Naive thymus-derived CD4-positive, alpha-beta T cell (primary cell): ENCODE measurements at regions of chr1 and their contacts with region 1.

Region 1: DNA sequence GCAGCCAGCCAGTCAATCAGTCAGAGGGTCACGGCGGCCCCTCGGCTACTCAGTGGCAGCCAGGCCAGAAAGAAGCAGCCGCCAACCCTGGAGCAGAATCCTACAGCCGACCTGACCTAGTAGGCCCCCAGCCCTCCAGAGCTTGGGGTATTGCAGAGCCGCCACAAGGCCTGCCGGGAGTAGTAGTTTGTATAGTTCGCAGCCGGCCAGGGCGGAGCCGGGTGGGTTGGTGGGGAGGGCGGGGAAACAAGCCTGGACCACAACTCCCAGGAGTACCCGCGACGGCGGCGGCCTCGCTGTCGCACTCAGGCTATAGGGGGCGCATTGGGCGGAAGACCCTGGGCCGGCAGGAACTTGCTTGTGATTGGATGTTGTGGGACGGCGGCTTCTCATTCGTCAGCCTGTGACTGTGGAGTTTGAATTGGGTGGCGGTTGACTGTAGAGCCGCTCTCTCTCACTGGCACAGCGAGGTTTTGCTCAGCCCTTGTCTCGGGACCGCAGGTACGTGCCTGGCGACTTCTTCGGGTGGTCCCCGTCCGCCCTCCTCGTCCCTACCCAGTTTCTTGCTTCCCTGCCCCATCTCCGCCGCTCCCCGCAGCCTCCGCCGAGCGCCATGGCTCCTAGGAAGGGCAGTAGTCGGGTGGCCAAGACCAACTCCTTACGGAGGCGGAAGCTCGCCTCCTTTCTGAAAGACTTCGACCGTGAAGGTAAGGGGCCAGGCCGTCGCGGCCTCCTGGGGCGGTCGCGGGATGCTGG is at the start of gene CDCA8:
- DNase-seq: peak; percentile 92 to 99 (median 97)
- ATAC-seq: peak; percentile 94
- H3K4me3 ChIP-seq: peak within 1 kb of the TSS; percentile 61
- H3K4me3 Mint-ChIP-seq: peak within 1 kb of the TSS; percentile 88 to 98 (median 96)
- H3K27ac ChIP-seq: peak within 1 kb of the TSS; percentile 77
- H3K27ac Mint-ChIP-seq: peak within 1 kb of the TSS; percentile 81 to 95 (median 88)
- H3K4me1 ChIP-seq: peaks cover 11 to 23% of the 10 kb centered on the region in 2 donors
- H3K4me1 Mint-ChIP-seq: peaks cover 23 to 54% (median 39%) of the 10 kb centered on the region in 7 donors
- H3K27me3 ChIP-seq: no peaks in the 10 kb centered on the region
- H3K27me3 Mint-ChIP-seq: peaks cover 0 to 3% (median 0%) of the 10 kb centered on the region in 5 donors
- total RNA-seq, gene CDCA8: 0.58 to 45.5 (median 0.92) TPM

Region 2: DNA sequence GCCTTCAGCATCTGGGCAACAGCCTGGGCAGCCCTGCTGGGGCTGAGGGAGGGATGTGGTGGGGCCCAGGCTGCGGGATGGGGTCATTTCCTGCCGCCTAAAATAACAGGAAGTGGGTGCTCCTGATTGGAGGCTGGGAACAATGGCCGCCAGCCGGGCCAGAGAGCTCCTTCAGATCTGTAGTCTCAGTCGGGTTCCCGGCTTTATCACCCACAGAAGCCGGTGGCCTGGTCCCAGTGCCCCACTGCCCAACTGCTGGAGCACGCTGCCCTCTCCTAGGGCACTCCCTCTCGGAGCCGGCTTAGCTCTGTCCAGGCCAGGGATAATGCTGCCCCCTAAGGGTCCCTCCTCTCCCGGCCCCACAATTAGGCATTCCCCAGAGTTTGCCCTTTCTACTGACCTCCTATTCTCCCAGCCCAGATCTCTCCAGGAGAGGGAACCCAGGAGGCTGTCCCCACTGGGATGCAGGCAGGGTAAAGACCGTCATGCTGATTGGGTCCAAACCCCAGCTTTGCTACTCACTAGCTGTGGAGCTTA is 1531.2 kb before region 1 on chr1:
- CTCF ChIA-PET with region 1: no interaction called
- POLR2A ChIA-PET with region 1: no interaction called
- intact Hi-C with region 1: loop called in 1 of 2 experiments (anchors 5 kb)
- DNase-seq: peak; percentile 27 to 72 (median 66)
- ATAC-seq: peak; percentile 44
- H3K4me3 ChIP-seq: peak overlapping the region; percentile 59
- H3K4me3 Mint-ChIP-seq: peak overlapping the region; percentile 79 to 92 (median 87)
- H3K27ac ChIP-seq: peak overlapping the region; percentile 94
- H3K27ac Mint-ChIP-seq: peak overlapping the region; percentile 92 to 99 (median 97)
- H3K4me1 ChIP-seq: peaks cover 56 to 66% of the 10 kb centered on the region in 2 donors
- H3K4me1 Mint-ChIP-seq: peaks cover 52 to 79% (median 70%) of the 10 kb centered on the region in 7 donors
- H3K27me3 ChIP-seq: no peaks in the 10 kb centered on the region
- H3K27me3 Mint-ChIP-seq: no peaks in the 10 kb centered on the region

Region 3: DNA sequence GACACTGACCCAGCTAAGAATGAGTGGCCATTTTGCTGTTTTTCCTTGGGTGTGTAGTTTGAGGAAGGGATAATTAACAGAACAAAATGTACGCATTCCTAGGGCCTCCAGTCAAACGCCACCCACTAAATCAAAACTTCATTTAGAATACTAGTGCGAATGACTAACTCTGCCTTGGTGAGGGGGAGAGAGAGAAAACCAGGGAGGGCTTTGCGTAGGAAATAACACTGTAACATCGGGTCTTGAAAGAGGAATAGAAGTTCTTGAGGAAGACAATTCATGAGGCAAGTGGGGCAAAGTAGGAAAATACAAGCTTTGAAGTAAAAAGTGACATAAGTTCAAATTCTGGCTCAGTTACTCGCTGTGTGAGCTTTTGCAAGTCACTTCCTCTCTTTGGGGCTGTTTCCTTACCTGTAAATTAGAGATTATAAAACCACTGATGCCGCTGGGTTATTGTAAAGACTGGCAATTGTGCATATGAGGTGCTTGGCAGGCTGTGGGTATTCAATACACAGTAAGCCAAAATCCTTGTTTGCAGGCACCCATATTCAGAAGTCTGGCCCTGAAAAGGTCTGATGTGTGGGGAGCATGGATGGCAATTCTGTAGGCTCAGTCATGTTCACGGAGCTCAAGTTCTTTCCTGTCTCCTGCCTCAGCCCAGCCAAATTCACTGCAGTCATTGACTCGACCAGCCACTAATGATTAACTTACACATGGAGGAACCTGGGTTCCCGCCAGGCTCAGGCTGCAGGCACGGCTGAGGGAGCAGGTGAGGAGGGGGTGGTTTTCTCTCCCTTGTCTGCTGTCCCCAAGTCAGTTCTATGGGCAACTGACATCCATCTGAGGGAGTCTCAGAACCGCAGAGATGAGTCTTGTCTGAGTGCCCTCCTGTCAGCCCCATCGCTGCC is 1069.3 kb before region 1 on chr1:
- CTCF ChIA-PET with region 1: no interaction called
- POLR2A ChIA-PET with region 1: no interaction called
- intact Hi-C with region 1: no loop called
- DNase-seq: no peak
- ATAC-seq: no peak
- H3K4me3 ChIP-seq: no peak overlapping the region
- H3K4me3 Mint-ChIP-seq: peak overlapping the region in 1 of 10 donors; percentile 10
- H3K27ac ChIP-seq: no peak overlapping the region
- H3K27ac Mint-ChIP-seq: peak overlapping the region in 1 of 9 donors; percentile 11
- H3K4me1 ChIP-seq: no peaks in the 10 kb centered on the region
- H3K4me1 Mint-ChIP-seq: peaks cover 0 to 11% (median 3%) of the 10 kb centered on the region in 7 donors
- H3K27me3 ChIP-seq: no peaks in the 10 kb centered on the region
- H3K27me3 Mint-ChIP-seq: peaks cover 3 to 10% (median 9%) of the 10 kb centered on the region in 5 donors

Region 4: GRCh38 chr1:37479255-37480124 is 212.8 kb before region 1 on chr1:
- CTCF ChIA-PET with region 1: no interaction called
- POLR2A ChIA-PET with region 1: interaction called, 19 read pairs
- intact Hi-C with region 1: loop called (anchors 1 kb)
- DNase-seq: peak in 8 of 9 donors; percentile 54 to 90 (median 63)
- ATAC-seq: peak; percentile 69
- H3K4me3 ChIP-seq: peak overlapping the region; percentile 87
- H3K4me3 Mint-ChIP-seq: peak overlapping the region; percentile 91 to 99 (median 96)
- H3K27ac ChIP-seq: peak overlapping the region; percentile 95
- H3K27ac Mint-ChIP-seq: peak overlapping the region; percentile 96 to 99 (median 98)
- H3K4me1 ChIP-seq: peaks cover 26% of the 10 kb centered on the region in 2 donors
- H3K4me1 Mint-ChIP-seq: peaks cover 21 to 50% (median 34%) of the 10 kb centered on the region in 7 donors
- H3K27me3 ChIP-seq: no peaks in the 10 kb centered on the region
- H3K27me3 Mint-ChIP-seq: no peaks in the 10 kb centered on the region

Region 5: GRCh38 chr1:37595440-37596319 is 96.6 kb before region 1 on chr1 and contains the start of gene GNL2:
- CTCF ChIA-PET with region 1: interaction called, 3 read pairs
- POLR2A ChIA-PET with region 1: interaction called, 3 read pairs
- intact Hi-C with region 1: loop called (anchors 1 kb)
- DNase-seq: peak; percentile 91 to 97 (median 95)
- ATAC-seq: peak; percentile 99
- H3K4me3 ChIP-seq: peak within 1 kb of the TSS; percentile 81
- H3K4me3 Mint-ChIP-seq: peak within 1 kb of the TSS; percentile 96 to 100 (median 99)
- H3K27ac ChIP-seq: peak within 1 kb of the TSS; percentile 86
- H3K27ac Mint-ChIP-seq: peak within 1 kb of the TSS; percentile 92 to 99 (median 98)
- H3K4me1 ChIP-seq: peaks cover 12 to 22% of the 10 kb centered on the region in 2 donors
- H3K4me1 Mint-ChIP-seq: peaks cover 17 to 43% (median 33%) of the 10 kb centered on the region in 7 donors
- H3K27me3 ChIP-seq: no peaks in the 10 kb centered on the region
- H3K27me3 Mint-ChIP-seq: peaks cover 0 to 12% (median 0%) of the 10 kb centered on the region in 5 donors
- total RNA-seq, gene GNL2: 33.3 to 60.9 (median 56.0) TPM

Region 6: DNA sequence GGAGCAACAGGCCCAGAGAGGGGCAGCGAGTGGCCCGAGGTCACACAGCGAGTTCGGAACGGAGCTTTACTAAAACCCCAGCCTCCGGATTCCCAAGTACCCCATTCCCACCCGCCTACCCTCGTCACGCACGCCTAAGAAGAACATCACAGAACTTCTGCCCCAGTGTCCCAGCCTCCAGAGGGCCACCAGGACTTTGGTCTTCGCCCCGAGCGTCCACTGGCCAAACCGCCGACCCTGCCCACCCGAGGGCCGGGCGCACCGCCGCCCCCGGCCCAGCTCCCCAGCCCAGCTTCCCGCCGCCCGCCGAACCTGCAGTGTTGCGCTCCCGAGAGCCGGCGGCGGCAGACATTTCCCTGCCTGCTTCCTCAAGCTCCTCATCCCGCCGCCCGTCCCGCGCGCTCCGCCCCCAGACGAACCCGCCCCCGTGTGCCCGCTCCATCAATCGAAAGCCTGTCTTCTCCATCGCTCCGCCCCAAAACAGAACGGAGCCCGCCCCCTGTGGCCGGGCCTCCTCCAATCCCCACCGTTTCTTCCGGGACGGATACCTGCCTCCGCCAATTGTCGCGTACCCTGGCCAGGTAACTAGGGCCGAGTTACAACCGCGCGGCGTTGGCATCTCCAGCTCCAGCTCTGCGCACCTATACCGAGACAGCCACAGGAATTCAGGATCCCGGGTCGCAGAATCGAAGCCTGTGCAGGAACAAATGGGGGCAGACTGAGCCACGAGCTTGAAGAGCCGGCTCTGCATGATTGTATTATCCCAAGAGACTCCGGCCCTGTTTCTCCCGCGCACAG is 239.3 kb after region 1 on chr1:
- CTCF ChIA-PET with region 1: no interaction called
- POLR2A ChIA-PET with region 1: no interaction called
- intact Hi-C with region 1: loop called (anchors 2 to 5 kb)
- DNase-seq: peak; percentile 92 to 97 (median 96)
- ATAC-seq: peak; percentile 100
- H3K4me3 ChIP-seq: peak overlapping the region; percentile 67
- H3K4me3 Mint-ChIP-seq: peak overlapping the region; percentile 89 to 99 (median 98)
- H3K27ac ChIP-seq: peak overlapping the region; percentile 79
- H3K27ac Mint-ChIP-seq: peak overlapping the region; percentile 78 to 94 (median 87)
- H3K4me1 ChIP-seq: peaks cover 15 to 17% of the 10 kb centered on the region in 2 donors
- H3K4me1 Mint-ChIP-seq: peaks cover 22 to 52% (median 39%) of the 10 kb centered on the region in 7 donors
- H3K27me3 ChIP-seq: no peaks in the 10 kb centered on the region
- H3K27me3 Mint-ChIP-seq: peaks cover 0 to 3% (median 0%) of the 10 kb centered on the region in 5 donors

Region 7: GRCh38 chr1:38012363-38013226 is 320.3 kb after region 1 on chr1 and contains the start of gene UTP11:
- CTCF ChIA-PET with region 1: no interaction called
- POLR2A ChIA-PET with region 1: interaction called, 3 read pairs
- intact Hi-C with region 1: loop called in 1 of 2 experiments (anchors 1 kb)
- DNase-seq: peak; percentile 63 to 95 (median 93)
- ATAC-seq: peak; percentile 97
- H3K4me3 ChIP-seq: peak within 1 kb of the TSS; percentile 84
- H3K4me3 Mint-ChIP-seq: peak within 1 kb of the TSS; percentile 96 to 99 (median 99)
- H3K27ac ChIP-seq: peak within 1 kb of the TSS; percentile 87
- H3K27ac Mint-ChIP-seq: peak within 1 kb of the TSS; percentile 95 to 99 (median 97)
- H3K4me1 ChIP-seq: peaks cover 10 to 14% of the 10 kb centered on the region in 2 donors
- H3K4me1 Mint-ChIP-seq: peaks cover 25 to 70% (median 47%) of the 10 kb centered on the region in 7 donors
- H3K27me3 ChIP-seq: no peaks in the 10 kb centered on the region
- H3K27me3 Mint-ChIP-seq: no peaks in the 10 kb centered on the region
- total RNA-seq, gene UTP11: 8.2 to 42.8 (median 15.7) TPM